Activated T-helper 1 cell treated with anti-CD3 and anti-CD28 coated beads, Interleukin-12 subunit alpha, Interleukin-12 subunit beta, Interleukin-2, Interleukin-4 antibody, amounts not matched to agents 30 ng/mL and 10 ng/mL and 1 ng/mL, durations not matched to agents 14 hours and 24 hours and 36 hours (primary cell): ENCODE measurements at regions of chr3 and their contacts with region 1.

Region 1: GRCh38 chr3:115692887-115693524 is 69.7 kb downstream of the GAP43 start:
- DNase-seq: peak; percentile 43
- H3K4me3 Mint-ChIP-seq: no peak overlapping the region
- H3K27ac Mint-ChIP-seq: no peak overlapping the region
- H3K4me1 Mint-ChIP-seq: no peaks in the 10 kb centered on the region
- H3K27me3 Mint-ChIP-seq: no peaks in the 10 kb centered on the region

Region 2: GRCh38 chr3:115040673-115041286 is 652.2 kb before region 1 on chr3:
- intact Hi-C with region 1: loop called (anchors 2 kb)
- DNase-seq: no peak
- H3K4me3 Mint-ChIP-seq: no peak overlapping the region
- H3K27ac Mint-ChIP-seq: no peak overlapping the region
- H3K4me1 Mint-ChIP-seq: no peaks in the 10 kb centered on the region
- H3K27me3 Mint-ChIP-seq: no peaks in the 10 kb centered on the region

Region 3: DNA sequence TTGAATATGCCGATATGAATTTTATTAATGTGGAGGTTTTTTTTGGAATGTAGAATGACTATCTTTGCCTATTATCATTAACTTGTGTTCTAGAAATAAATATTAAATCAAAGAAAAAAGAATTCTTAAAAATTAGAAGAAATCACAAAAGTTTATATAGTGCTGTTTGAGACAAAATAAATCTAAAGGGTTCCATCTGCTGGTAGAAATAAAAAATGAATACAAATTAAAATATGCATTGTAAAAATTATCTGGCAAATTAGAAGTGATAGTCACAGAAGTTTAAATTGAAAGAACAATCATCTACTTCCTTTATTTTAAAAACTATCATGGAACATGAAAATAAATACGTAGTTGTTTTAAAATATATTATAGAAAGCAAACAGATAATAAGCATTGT is 523.2 kb before region 1 on chr3:
- intact Hi-C with region 1: loop called (anchors 2 kb)
- DNase-seq: no peak
- H3K4me3 Mint-ChIP-seq: no peak overlapping the region
- H3K27ac Mint-ChIP-seq: no peak overlapping the region
- H3K4me1 Mint-ChIP-seq: peaks cover 13% of the 10 kb centered on the region
- H3K27me3 Mint-ChIP-seq: peaks cover 10% of the 10 kb centered on the region

Region 4: GRCh38 chr3:115341208-115341607 is 351.8 kb before region 1 on chr3:
- intact Hi-C with region 1: loop called (anchors 10 kb)
- DNase-seq: no peak
- H3K4me3 Mint-ChIP-seq: no peak overlapping the region
- H3K27ac Mint-ChIP-seq: no peak overlapping the region
- H3K4me1 Mint-ChIP-seq: peaks cover 5% of the 10 kb centered on the region
- H3K27me3 Mint-ChIP-seq: no peaks in the 10 kb centered on the region

Region 5: DNA sequence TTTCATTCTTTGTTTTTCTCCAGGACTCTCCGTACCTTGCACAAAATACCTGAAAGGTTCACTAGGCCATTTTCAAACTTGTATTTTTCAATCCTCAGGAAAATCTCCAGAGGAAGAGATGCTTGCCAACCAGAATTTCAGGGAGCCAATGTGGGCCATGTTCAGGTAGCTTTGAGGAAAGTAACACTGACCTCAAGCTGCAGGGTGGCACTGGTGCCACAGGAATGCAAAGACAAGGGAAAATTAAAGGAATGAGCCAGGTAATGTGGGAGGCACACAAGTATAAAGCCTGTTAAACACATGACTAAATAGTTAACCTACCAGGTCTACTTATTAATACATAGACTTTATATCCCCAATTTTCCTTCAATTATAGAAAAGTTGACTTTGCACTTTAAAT is 121.6 kb before region 1 on chr3:
- intact Hi-C with region 1: no loop called
- DNase-seq: no peak
- H3K4me3 Mint-ChIP-seq: no peak overlapping the region
- H3K27ac Mint-ChIP-seq: no peak overlapping the region
- H3K4me1 Mint-ChIP-seq: no peaks in the 10 kb centered on the region
- H3K27me3 Mint-ChIP-seq: peaks cover 5% of the 10 kb centered on the region

Region 6: DNA sequence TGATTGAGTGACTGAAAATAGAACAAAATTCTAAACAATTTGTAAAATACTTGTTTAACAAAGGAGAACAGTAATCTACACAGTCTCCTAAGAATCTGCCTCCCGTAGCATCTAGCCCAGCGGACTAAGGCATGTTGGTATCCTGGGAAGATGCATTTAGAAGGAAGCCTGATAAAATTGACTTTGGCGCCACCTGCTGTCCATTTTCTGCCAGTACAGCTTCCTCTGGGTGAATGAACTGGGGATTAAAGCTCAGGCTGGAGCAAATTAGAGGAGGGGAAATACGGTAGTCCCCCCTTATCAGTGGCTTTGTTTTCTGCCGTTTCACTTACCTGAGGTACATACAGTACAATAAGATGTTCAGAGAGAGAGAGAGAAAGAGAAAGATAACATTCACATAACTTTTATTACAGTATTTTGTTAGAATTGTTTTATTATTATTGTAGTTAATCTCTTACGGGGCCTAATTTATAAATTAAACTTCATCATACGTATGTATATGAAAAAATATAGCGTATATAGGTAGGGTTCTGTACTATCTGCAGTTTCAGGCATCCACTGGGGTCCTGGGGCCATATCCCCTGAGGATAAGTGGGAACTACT is 121.9 kb after region 1 on chr3:
- intact Hi-C with region 1: loop called (anchors 2 kb)
- DNase-seq: peak; percentile 33
- H3K4me3 Mint-ChIP-seq: no peak overlapping the region
- H3K27ac Mint-ChIP-seq: no peak overlapping the region
- H3K4me1 Mint-ChIP-seq: peaks cover 4% of the 10 kb centered on the region
- H3K27me3 Mint-ChIP-seq: peaks cover 6% of the 10 kb centered on the region

Region 7: DNA sequence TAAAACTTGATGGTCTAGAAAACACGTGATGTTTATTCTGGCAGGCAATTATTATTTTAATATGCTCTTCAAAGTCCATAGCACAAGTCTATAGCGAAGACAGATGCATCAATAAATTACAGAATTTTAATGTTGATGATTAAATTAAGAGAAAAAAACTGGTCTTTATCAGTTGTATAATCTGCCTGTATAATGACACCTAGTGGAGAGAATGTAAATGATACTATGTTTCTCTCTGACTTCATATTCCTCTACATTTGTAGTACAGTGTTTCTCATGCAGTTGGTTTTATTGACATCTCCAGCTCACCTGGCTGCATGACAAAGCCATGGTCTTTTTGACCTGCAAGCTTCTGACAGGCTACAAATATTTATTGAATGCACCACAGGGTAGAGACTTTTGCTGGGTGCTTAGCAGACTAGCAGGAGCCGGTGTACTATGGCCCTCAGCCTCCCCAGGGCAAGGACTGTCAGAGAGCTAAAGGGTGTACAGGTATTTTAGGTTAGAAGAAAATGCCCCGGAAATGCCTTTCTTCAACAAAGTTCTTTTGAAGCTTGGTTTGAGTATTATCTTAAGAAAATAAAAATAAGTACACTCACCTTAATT is 220.2 kb after region 1 on chr3:
- intact Hi-C with region 1: no loop called
- DNase-seq: no peak
- H3K4me3 Mint-ChIP-seq: no peak overlapping the region
- H3K27ac Mint-ChIP-seq: no peak overlapping the region
- H3K4me1 Mint-ChIP-seq: no peaks in the 10 kb centered on the region
- H3K27me3 Mint-ChIP-seq: no peaks in the 10 kb centered on the region